ENCODE measurements at regions of chr3 and their contacts with region 1.

Region 1: GRCh38 chr3:187679638-187680396 is 9.6 kb upstream of the SST start:
- DNase-seq: peak; percentile 92
- H3K4me3 ChIP-seq: no peak overlapping the region
- H3K27ac ChIP-seq: no peak overlapping the region
- H3K4me1 ChIP-seq: peaks cover 0 to 11% (median 4%) of the 10 kb centered on the region in 4 donors
- H3K27me3 ChIP-seq: no peaks in the 10 kb centered on the region
- CTCF ChIP-seq: peak; percentile 89 to 94 (median 94)
- EP300 ChIP-seq: no peak
- POLR2A ChIP-seq: no peak

Region 2: DNA sequence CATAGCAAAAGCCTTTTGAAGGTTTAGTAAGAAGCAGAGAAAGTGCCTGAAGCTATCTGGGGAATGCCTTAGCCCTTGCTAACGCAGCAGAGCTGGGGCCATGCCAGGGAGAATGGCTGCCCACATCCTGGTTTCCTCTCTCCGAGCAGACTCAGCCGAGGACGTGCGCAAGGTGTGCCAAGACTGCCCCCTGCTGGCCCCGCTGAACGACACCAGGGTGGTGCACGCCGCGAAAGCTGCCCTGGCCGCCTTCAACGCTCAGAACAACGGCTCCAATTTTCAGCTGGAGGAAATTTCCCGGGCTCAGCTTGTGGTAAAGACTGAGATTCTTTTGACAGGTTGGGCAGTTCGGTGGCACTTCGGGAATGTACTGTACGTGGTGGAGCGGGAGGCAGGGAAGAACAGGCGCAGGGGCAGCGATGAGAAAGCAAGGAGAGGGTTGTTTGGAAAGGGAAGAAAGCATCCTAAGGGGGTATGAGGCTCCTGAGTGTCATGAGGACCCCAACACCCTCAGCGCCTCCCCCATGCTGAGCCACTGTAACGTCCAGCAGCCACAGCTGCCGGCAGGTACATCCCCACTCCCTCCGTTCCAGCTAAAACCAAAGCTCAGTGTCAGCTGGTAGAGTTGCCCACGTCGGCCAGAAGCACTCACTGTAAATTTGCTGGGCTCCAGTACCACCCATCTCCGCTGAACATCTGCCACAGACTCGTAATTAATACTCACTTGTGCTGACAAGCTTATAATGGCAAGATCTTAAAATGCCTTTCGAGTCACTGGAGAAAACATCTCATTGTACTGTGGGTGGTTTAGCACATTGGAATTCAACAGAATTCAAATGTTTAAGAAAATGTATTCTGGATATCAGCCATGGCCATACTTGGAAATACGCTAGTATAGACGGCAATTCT is 1062.5 kb before region 1 on chr3:
- intact Hi-C with region 1: no loop called
- DNase-seq: no peak
- H3K4me3 ChIP-seq: peak overlapping the region in 3 of 4 donors; percentile 6 to 32 (median 22)
- H3K27ac ChIP-seq: no peak overlapping the region
- H3K4me1 ChIP-seq: peaks cover 0 to 18% (median 12%) of the 10 kb centered on the region in 4 donors
- H3K27me3 ChIP-seq: peaks cover 0 to 57% (median 0%) of the 10 kb centered on the region in 4 donors
- CTCF ChIP-seq: peak; percentile 83 to 92 (median 87)
- EP300 ChIP-seq: no peak
- POLR2A ChIP-seq: no peak

Region 3: DNA sequence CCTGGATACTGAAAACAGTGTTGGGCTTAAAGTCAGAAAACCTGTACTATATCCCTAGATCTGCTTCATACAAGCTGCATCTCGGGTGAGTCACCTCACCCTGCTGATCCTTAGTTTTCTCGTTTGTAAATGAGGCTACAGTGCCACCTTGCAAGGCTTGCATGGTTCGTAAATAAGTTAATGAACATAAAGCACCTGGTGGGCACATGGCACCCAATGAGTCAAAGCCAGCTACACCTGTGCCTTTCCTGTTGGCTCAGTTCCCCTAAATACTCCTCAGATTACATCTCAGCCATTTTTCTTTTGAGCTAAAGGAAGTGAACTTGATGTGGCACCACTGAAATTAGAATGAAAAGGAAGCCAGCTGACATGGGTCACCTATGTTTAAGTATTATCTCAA is 456.0 kb before region 1 on chr3:
- intact Hi-C with region 1: loop called (anchors 2 kb)
- DNase-seq: no peak
- H3K4me3 ChIP-seq: no peak overlapping the region
- H3K27ac ChIP-seq: no peak overlapping the region
- H3K4me1 ChIP-seq: peaks cover 0 to 12% (median 7%) of the 10 kb centered on the region in 4 donors
- H3K27me3 ChIP-seq: no peaks in the 10 kb centered on the region
- CTCF ChIP-seq: no peak
- EP300 ChIP-seq: no peak
- POLR2A ChIP-seq: no peak

Region 4: DNA sequence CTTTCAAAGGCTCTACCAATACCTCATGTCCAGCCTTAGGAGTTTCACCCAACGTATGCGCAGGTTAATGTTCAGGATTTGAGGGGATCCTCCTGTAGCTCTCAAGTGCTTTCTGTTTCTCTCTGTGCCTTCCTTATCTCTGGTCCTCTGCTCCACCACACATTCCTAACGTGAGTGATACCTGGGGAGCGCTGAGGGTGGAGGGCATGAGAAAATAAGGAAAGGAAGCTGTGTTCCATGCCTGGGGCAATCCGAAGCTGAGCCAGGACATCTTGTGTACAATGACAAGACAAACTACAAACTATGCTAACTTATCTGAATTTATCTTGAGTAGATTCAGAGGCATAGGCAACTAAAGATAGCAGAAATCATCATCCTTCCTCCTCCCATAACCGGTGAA is 146.0 kb before region 1 on chr3:
- intact Hi-C with region 1: no loop called
- DNase-seq: no peak
- H3K4me3 ChIP-seq: no peak overlapping the region
- H3K27ac ChIP-seq: no peak overlapping the region
- H3K4me1 ChIP-seq: no peaks in the 10 kb centered on the region
- H3K27me3 ChIP-seq: peaks cover 0 to 10% (median 0%) of the 10 kb centered on the region in 4 donors
- CTCF ChIP-seq: no peak
- EP300 ChIP-seq: no peak
- POLR2A ChIP-seq: no peak

Measured in esophagus muscularis mucosa (tissue), 4 donors.